OCI-LY7 (cell line): ENCODE measurements at regions of chr1 and their contacts with region 1.

Region 1: GRCh38 chr1:86913896-86914634 is at the start of gene SELENOF:
- DNase-seq: peak; percentile 100
- H3K4me3 ChIP-seq: peak within 1 kb of the TSS; percentile 94
- H3K27ac ChIP-seq: peak within 1 kb of the TSS; percentile 83
- H3K4me1 ChIP-seq: peaks cover 29% of the 10 kb centered on the region
- CTCF ChIP-seq: no peak
- total RNA-seq, gene SELENOF: 93.0 and 99.4 TPM in 2 replicates

Region 2: GRCh38 chr1:86774305-86775295 is 139.5 kb before region 1 on chr1:
- CTCF ChIA-PET with region 1: no interaction called
- POLR2A ChIA-PET with region 1: interaction called, 3 read pairs
- intact Hi-C with region 1: loop called (anchors 2 kb)
- DNase-seq: peak; percentile 93
- H3K4me3 ChIP-seq: peak overlapping the region; percentile 56
- H3K27ac ChIP-seq: peak overlapping the region; percentile 89
- H3K4me1 ChIP-seq: peaks cover 47% of the 10 kb centered on the region
- CTCF ChIP-seq: no peak

Region 3: GRCh38 chr1:86833461-86834215 is 80.4 kb before region 1 on chr1:
- CTCF ChIA-PET with region 1: no interaction called
- POLR2A ChIA-PET with region 1: interaction called, 9 read pairs
- intact Hi-C with region 1: loop called (anchors 1 kb)
- DNase-seq: peak; percentile 92
- H3K4me3 ChIP-seq: peak overlapping the region; percentile 73
- H3K27ac ChIP-seq: peak overlapping the region; percentile 66
- H3K4me1 ChIP-seq: peaks cover 35% of the 10 kb centered on the region
- CTCF ChIP-seq: peak; percentile 87

Region 4: GRCh38 chr1:86933562-86934377 is 19.7 kb after region 1 on chr1:
- CTCF ChIA-PET with region 1: no interaction called
- POLR2A ChIA-PET with region 1: interaction called, 25 read pairs
- intact Hi-C with region 1: no loop called
- DNase-seq: peak; percentile 22
- H3K4me3 ChIP-seq: no peak overlapping the region
- H3K27ac ChIP-seq: peak overlapping the region; percentile 8
- H3K4me1 ChIP-seq: peaks cover 34% of the 10 kb centered on the region
- CTCF ChIP-seq: no peak

Region 5: GRCh38 chr1:87051965-87052364 is 137.9 kb after region 1 on chr1:
- CTCF ChIA-PET with region 1: no interaction called
- POLR2A ChIA-PET with region 1: interaction called, 42 read pairs
- intact Hi-C with region 1: loop called (anchors 2 kb)
- DNase-seq: peak; percentile 83
- H3K4me3 ChIP-seq: peak overlapping the region; percentile 57
- H3K27ac ChIP-seq: peak overlapping the region; percentile 98
- H3K4me1 ChIP-seq: peaks cover 81% of the 10 kb centered on the region
- CTCF ChIP-seq: no peak

Region 6: DNA sequence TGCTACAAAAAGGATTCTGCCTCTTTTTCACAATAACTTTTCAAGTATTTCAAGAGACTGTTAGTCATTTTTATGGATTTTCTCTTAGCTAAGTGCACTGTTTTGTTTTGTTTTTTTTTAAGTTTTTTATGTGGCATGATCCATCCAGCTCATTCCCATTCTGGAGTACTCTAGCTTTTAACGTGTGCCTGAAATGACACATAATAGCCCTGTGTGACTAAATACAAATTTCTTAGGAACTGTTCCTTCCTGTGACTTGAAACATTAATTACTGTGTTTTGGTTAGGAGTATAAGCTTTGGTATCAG is 144.2 kb after region 1 on chr1:
- CTCF ChIA-PET with region 1: no interaction called
- POLR2A ChIA-PET with region 1: interaction called, 42 read pairs
- intact Hi-C with region 1: loop called (anchors 2 kb)
- DNase-seq: no peak
- H3K4me3 ChIP-seq: peak overlapping the region; percentile 58
- H3K27ac ChIP-seq: peak overlapping the region; percentile 98
- H3K4me1 ChIP-seq: peaks cover 94% of the 10 kb centered on the region
- CTCF ChIP-seq: no peak